Dorsolateral prefrontal cortex (tissue), 120 donors: ENCODE measurements at regions of chr7 and their contacts with region 1.

Region 1: GRCh38 chr7:66740302-66740979 is at the start of gene RABGEF1:
- DNase-seq: peak; percentile 95 to 99 (median 97)
- H3K4me3 ChIP-seq: peak within 1 kb of the TSS; percentile 56 to 100 (median 95)
- H3K27ac ChIP-seq: peak within 1 kb of the TSS; percentile 68 to 99 (median 94)
- H3K27me3 ChIP-seq: no peaks in the 10 kb centered on the region
- CTCF ChIP-seq: peak in 24 of 56 donors; percentile 5 to 44 (median 21)
- total RNA-seq, gene RABGEF1: 30.2 to 59.5 (median 45.8) TPM

Region 2: GRCh38 chr7:66529883-66530610 is 210.4 kb before region 1 on chr7:
- intact Hi-C with region 1: no loop called
- DNase-seq: peak in 1 of 10 donors; percentile 42
- H3K4me3 ChIP-seq: no peak overlapping the region
- H3K27ac ChIP-seq: peak overlapping the region in 55 of 59 donors; percentile 5 to 84 (median 61)
- H3K27me3 ChIP-seq: no peaks in the 10 kb centered on the region
- CTCF ChIP-seq: no peak

Region 3: DNA sequence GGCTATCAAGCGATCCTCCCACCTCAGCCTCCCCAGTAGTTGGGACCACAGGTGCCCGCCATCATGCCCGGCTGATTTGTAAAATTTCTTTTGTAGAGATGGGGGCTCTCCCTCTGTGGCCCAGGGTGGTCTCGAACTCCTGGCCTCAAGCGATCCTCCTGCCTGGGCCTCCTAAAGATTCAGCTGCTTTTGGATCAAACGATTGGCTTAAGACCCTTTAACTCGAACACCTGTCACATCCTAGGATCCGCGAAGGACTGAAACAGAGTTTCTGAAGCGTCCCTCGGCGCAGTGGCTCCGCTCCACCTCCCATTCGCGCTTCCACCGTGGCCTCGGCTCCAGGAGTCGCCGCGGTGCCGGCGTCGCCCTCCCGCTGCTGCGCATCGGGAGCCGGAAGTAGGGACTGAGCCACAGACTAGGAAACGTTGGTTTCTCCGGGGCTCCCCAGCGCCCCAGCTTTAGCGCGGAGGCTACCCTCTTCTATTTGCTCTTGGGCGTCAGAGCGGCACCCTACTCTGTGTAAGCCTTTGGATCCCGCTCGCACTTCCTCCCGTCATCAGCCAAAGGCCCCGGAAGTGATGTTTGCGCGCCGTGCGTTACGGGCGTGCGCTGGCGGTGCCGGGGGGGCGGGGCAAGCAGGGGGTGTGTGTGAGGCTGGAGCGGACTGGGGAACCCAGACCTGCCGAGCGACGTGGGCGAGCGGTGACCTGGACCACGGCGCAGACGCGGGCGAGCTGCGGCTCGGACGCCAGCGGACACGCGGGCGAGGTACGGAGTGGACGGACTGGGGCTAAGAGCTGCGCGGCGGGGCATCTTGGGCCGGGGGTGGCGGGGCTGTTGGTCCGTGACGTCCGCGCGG is 58.7 kb before region 1 on chr7:
- intact Hi-C with region 1: loop called (anchors 5 kb)
- DNase-seq: peak; percentile 92 to 98 (median 96)
- H3K4me3 ChIP-seq: peak overlapping the region; percentile 71 to 99 (median 94)
- H3K27ac ChIP-seq: peak overlapping the region; percentile 43 to 99 (median 96)
- H3K27me3 ChIP-seq: no peaks in the 10 kb centered on the region
- CTCF ChIP-seq: peak in 10 of 56 donors; percentile 9 to 30 (median 14)

Region 4: DNA sequence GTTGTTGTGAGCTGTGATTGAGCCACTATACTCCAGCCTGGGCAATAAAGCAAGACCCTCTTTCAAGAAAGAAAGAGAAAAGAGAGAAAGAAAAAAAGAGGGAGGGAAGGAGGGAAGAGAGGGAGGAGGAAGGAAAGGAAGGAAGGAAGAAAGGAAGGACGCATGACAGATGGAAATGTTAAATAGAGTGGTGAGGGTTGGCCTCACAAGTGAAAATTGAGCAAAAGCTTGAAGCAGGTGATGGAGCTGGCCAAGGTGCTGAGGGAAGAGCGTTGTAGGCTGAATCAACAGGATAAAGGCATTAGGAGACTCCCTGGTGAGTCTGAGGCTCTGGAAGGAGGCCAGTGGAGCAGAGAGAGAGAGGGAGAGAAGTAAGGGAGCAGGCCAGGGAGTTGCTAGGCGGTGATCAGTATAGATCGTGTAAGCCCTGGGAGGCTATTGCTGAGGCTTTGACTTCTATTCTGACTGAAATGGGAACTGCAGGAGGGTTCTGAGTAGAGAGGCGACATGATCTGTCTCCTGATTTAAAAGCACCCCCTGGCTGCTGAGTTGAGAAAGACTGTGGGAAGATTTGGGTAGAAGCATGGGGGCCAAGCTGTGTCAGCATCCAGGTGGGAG is 154.1 kb after region 1 on chr7:
- intact Hi-C with region 1: no loop called
- DNase-seq: no peak
- H3K4me3 ChIP-seq: no peak overlapping the region
- H3K27ac ChIP-seq: no peak overlapping the region
- H3K27me3 ChIP-seq: no peaks in the 10 kb centered on the region
- CTCF ChIP-seq: peak in 47 of 56 donors; percentile 15 to 62 (median 41)

Region 5: GRCh38 chr7:66920769-66921395 is 180.4 kb after region 1 on chr7 and contains the start of gene TMEM248:
- intact Hi-C with region 1: loop called in 1 of 2 experiments (anchors 2 kb)
- DNase-seq: peak; percentile 80 to 92 (median 88)
- H3K4me3 ChIP-seq: peak within 1 kb of the TSS; percentile 62 to 99 (median 92)
- H3K27ac ChIP-seq: peak within 1 kb of the TSS in 52 of 59 donors; percentile 0 to 87 (median 68)
- H3K27me3 ChIP-seq: no peaks in the 10 kb centered on the region
- CTCF ChIP-seq: peak in 23 of 56 donors; percentile 7 to 47 (median 24)
- total RNA-seq, gene TMEM248: 55.9 to 106 (median 78.3) TPM

Region 6: GRCh38 chr7:66946545-66946944 is 206.1 kb after region 1 on chr7:
- intact Hi-C with region 1: no loop called
- DNase-seq: no peak
- H3K4me3 ChIP-seq: no peak overlapping the region
- H3K27ac ChIP-seq: peak overlapping the region in 1 of 59 donors; percentile 28
- H3K27me3 ChIP-seq: no peaks in the 10 kb centered on the region
- CTCF ChIP-seq: no peak